ENCODE measurements at regions of chr6 and their contacts with region 1.

Region 1: GRCh38 chr6:85482905-85483700 is 33.2 kb downstream of the NT5E start:
- DNase-seq: peak; percentile 87
- H3K4me3 Mint-ChIP-seq: no peak overlapping the region
- H3K27ac Mint-ChIP-seq: no peak overlapping the region
- H3K4me1 Mint-ChIP-seq: peaks cover 7% of the 10 kb centered on the region
- H3K27me3 Mint-ChIP-seq: peaks cover 5% of the 10 kb centered on the region

Region 2: DNA sequence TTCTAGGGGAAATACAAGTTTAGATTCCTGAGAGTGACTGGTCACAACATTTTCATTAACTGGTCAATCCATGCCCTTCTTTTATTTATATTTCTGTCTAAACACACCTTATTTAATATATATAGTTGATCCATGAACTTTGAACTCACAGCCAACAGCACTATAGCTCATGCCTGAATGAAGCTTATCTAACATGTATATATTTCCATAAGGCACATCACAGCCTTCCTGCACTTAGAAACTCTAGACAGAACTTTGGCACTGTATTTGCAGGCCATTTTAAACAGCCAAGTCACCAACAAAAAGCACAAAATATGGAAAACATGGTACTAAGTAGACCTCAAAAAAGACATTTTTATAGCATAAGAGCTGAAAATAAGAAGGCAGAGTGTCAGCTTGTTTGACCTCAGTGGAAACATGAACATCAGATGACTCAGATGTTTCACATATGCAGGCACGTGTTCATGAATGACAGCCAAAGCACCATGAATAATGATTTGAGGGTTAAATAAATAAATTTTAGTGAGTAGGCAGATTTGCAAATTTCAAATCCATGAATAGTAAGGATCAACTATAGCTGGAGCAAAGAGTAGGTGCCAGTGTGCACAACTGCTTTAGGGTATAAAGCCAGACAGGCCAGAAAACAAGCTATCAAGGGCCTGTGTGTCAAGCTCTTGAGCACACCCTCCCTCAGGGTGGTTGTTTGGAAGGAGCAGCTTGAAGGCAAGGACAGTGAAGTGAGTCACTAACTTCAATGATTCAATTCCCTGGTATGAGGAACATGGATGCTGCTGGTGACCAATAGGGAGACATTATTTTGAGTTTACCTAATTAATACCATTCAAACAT is 122.1 kb before region 1 on chr6:
- CTCF ChIA-PET with region 1: interaction called, 103 read pairs
- POLR2A ChIA-PET with region 1: no interaction called
- intact Hi-C with region 1: no loop called
- DNase-seq: no peak
- H3K4me3 Mint-ChIP-seq: no peak overlapping the region
- H3K27ac Mint-ChIP-seq: no peak overlapping the region
- H3K4me1 Mint-ChIP-seq: peaks cover 5% of the 10 kb centered on the region
- H3K27me3 Mint-ChIP-seq: peaks cover 4% of the 10 kb centered on the region

Region 3: DNA sequence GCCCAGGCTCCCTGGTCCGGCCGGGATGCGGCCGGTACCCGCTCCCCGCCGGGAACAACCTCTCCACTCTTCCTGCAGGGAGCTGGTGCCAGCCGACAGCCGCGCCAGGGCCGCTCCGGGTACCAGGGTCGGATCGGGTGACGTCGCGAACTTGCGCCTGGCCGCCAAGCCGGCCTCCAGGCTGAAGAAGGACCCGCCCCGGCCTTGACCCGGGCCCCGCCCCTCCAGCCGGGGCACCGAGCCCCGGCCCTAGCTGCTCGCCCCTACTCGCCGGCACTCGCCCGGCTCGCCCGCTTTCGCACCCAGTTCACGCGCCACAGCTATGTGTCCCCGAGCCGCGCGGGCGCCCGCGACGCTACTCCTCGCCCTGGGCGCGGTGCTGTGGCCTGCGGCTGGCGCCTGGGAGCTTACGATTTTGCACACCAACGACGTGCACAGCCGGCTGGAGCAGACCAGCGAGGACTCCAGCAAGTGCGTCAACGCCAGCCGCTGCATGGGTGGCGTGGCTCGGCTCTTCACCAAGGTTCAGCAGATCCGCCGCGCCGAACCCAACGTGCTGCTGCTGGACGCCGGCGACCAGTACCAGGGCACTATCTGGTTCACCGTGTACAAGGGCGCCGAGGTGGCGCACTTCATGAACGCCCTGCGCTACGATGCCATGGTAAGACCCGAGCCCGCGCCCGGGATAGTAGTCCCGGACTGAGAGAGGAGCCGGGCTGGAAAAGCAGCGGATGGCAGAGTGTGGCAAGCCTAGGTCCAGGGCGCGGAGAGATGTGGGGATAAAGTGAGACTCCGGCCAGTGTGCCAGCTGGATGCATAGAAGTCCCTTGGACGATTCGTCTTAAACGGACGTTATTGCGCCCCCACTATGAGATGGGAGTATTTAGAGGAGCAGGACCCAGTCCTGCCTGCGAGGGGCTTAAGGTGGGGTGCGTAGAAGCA is 33.0 kb before region 1 on chr6 and contains the start of gene NT5E:
- CTCF ChIA-PET with region 1: interaction called, 24 read pairs
- POLR2A ChIA-PET with region 1: interaction called, 3 read pairs
- intact Hi-C with region 1: loop called (anchors 2 kb)
- DNase-seq: peak; percentile 51
- H3K4me3 Mint-ChIP-seq: peak within 1 kb of the TSS; percentile 60
- H3K27ac Mint-ChIP-seq: peak within 1 kb of the TSS; percentile 0
- H3K4me1 Mint-ChIP-seq: peaks cover 18% of the 10 kb centered on the region
- H3K27me3 Mint-ChIP-seq: peaks cover 53% of the 10 kb centered on the region
- total RNA-seq, gene NT5E: 3.7 to 3.8 TPM

Region 4: GRCh38 chr6:85468261-85468660 is 14.8 kb before region 1 on chr6:
- CTCF ChIA-PET with region 1: interaction called, 37 read pairs
- POLR2A ChIA-PET with region 1: interaction called, 4 read pairs
- intact Hi-C with region 1: loop called (anchors 1 kb)
- DNase-seq: no peak
- H3K4me3 Mint-ChIP-seq: no peak overlapping the region
- H3K27ac Mint-ChIP-seq: no peak overlapping the region
- H3K4me1 Mint-ChIP-seq: peaks cover 27% of the 10 kb centered on the region
- H3K27me3 Mint-ChIP-seq: peaks cover 3% of the 10 kb centered on the region

Region 5: GRCh38 chr6:85506441-85507093 is 23.5 kb after region 1 on chr6:
- CTCF ChIA-PET with region 1: interaction called, 15 read pairs
- POLR2A ChIA-PET with region 1: no interaction called
- intact Hi-C with region 1: no loop called
- DNase-seq: peak; percentile 70
- H3K4me3 Mint-ChIP-seq: no peak overlapping the region
- H3K27ac Mint-ChIP-seq: peak overlapping the region; percentile 4
- H3K4me1 Mint-ChIP-seq: peaks cover 10% of the 10 kb centered on the region
- H3K27me3 Mint-ChIP-seq: no peaks in the 10 kb centered on the region